CD4-positive, alpha-beta memory T cell (primary cell): ENCODE measurements at regions of chr3 and their contacts with region 1.

Region 1: GRCh38 chr3:14064910-14065309 is 59.8 kb downstream of the CHCHD4 start:
- DNase-seq: no peak
- H3K4me3 ChIP-seq: no peak overlapping the region
- H3K4me3 Mint-ChIP-seq: no peak overlapping the region
- H3K27ac ChIP-seq: no peak overlapping the region
- H3K27ac Mint-ChIP-seq: no peak overlapping the region
- H3K4me1 ChIP-seq: no peaks in the 10 kb centered on the region
- H3K4me1 Mint-ChIP-seq: no peaks in the 10 kb centered on the region
- H3K27me3 ChIP-seq: no peaks in the 10 kb centered on the region
- H3K27me3 Mint-ChIP-seq: peaks cover 3 to 7% of the 10 kb centered on the region in 2 donors

Region 2: DNA sequence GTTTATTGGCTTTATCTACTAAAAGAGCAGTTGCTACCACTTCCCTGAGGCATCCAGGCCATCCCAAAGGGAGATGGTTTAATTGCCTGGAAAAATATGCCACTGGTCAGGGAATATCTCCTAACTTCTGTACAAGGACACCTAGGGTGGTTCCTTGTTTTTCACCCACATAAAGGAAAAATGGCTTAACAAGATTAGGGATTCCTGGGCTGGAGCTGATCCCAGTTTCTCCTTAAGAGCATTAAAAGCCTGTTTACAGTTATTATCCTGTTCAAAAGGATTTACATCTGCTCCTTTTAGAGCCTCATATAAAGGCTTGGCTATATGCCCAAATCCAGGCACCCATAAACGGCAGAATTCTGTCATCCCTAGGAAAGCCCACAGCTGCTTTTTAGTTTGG is 114.9 kb before region 1 on chr3:
- CTCF ChIA-PET with region 1: no interaction called
- POLR2A ChIA-PET with region 1: no interaction called
- intact Hi-C with region 1: no loop called
- DNase-seq: no peak
- H3K4me3 ChIP-seq: no peak overlapping the region
- H3K4me3 Mint-ChIP-seq: no peak overlapping the region
- H3K27ac ChIP-seq: no peak overlapping the region
- H3K27ac Mint-ChIP-seq: no peak overlapping the region
- H3K4me1 ChIP-seq: no peaks in the 10 kb centered on the region
- H3K4me1 Mint-ChIP-seq: no peaks in the 10 kb centered on the region
- H3K27me3 ChIP-seq: no peaks in the 10 kb centered on the region
- H3K27me3 Mint-ChIP-seq: peaks cover 11 to 21% of the 10 kb centered on the region in 2 donors

Region 3: GRCh38 chr3:14110699-14111098 is 45.8 kb after region 1 on chr3:
- CTCF ChIA-PET with region 1: no interaction called
- POLR2A ChIA-PET with region 1: no interaction called
- intact Hi-C with region 1: loop called (anchors 1 kb)
- DNase-seq: no peak
- H3K4me3 ChIP-seq: no peak overlapping the region
- H3K4me3 Mint-ChIP-seq: no peak overlapping the region
- H3K27ac ChIP-seq: no peak overlapping the region
- H3K27ac Mint-ChIP-seq: no peak overlapping the region
- H3K4me1 ChIP-seq: no peaks in the 10 kb centered on the region
- H3K4me1 Mint-ChIP-seq: no peaks in the 10 kb centered on the region
- H3K27me3 ChIP-seq: no peaks in the 10 kb centered on the region
- H3K27me3 Mint-ChIP-seq: no peaks in the 10 kb centered on the region